RWPE1 (cell line): ENCODE measurements at regions of chr14 and their contacts with region 1.

Region 1: GRCh38 chr14:50109342-50109741 is 7.0 kb downstream of the VCPKMT start:
- DNase-seq: no peak
- H3K27ac ChIP-seq: no peak overlapping the region
- CTCF ChIP-seq: no peak

Region 2: DNA sequence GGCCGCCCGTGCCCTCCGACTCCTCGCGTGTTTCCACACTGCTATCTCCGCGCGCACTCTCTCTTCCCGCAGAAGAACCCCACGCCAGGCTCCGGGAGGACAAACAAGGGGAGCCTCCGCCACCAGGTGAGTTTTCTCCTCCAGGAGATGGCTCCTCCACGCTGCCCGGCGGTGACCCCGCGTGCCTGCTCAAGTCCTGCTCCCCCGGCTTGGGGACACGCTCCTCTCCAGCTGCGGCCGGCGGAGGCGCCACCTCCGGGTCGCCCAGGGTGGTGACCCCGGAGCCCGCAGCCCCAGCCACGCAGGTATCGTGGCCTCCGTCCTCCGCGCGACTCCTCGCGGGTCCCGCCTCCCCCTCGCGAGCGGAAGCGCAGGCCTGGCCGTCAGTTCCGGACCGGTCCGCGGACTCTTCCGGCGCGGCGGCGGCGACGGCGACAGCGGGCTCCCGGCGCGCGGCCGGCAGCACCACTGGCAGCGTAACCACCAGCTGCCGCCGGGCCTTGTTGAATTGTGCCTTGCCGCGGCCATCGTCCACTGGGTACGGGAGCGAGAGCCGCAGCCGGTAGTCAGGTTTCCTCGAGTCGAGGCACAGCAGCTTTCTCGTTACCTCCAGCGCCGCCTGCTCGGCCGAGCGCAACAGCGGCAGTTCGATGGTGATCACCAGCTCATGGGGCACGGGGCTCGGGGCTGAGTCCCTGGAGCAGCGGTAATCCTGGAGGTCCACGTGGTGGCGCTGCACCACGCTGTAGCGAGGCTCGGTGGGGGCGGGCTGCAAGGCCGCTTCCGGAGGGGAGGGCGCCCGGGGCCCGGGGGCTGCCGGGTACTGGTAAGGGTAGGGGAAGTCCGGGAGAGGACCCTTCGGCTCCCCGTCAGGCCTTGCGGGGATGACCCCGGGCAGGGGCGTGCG is 475.4 kb before region 1 on chr14:
- CTCF ChIA-PET with region 1: no interaction called
- POLR2A ChIA-PET with region 1: interaction called, 12 read pairs
- DNase-seq: peak; percentile 85
- H3K27ac ChIP-seq: peak overlapping the region; percentile 97
- CTCF ChIP-seq: peak; percentile 90

Region 3: DNA sequence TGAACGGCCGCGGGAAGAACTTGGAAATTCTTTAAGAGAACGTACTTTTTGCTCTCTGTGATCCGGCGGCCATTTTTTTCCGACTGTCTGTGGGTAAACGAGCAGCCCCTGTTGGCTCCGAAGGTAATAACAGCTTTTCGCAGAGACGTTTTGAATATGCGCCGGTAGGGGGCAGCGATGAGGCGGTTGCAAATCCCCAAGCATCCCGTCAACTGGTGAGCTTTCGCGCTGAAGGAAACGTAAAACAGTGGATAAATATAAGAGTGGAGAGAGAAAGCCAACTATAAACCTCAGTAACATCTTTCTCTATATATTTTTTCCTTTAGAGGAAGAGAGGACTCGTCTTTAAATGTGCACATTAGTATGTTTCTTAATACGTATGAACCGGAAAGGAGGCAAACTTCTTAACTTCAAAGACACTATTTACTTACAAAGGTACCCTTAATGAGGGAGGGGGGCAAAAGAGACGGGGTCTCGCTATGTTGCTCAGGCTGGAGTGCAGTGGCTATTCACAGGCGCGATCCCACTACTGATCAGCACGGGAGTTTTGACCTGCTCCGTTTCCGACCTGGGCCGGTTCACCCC is 247.2 kb before region 1 on chr14:
- CTCF ChIA-PET with region 1: interaction called, 14 read pairs
- POLR2A ChIA-PET with region 1: no interaction called
- DNase-seq: peak; percentile 56
- H3K27ac ChIP-seq: peak overlapping the region; percentile 93
- CTCF ChIP-seq: peak; percentile 100

Region 4: GRCh38 chr14:50013559-50014333 is 95.6 kb before region 1 on chr14:
- CTCF ChIA-PET with region 1: no interaction called
- POLR2A ChIA-PET with region 1: no interaction called
- DNase-seq: peak; percentile 57
- H3K27ac ChIP-seq: no peak overlapping the region
- CTCF ChIP-seq: no peak

Region 5: GRCh38 chr14:50084666-50085065 is 24.7 kb before region 1 on chr14:
- CTCF ChIA-PET with region 1: no interaction called
- POLR2A ChIA-PET with region 1: no interaction called
- DNase-seq: no peak
- H3K27ac ChIP-seq: no peak overlapping the region
- CTCF ChIP-seq: no peak